Activated CD8-positive, alpha-beta T cell treated with anti-CD3 and anti-CD28 coated beads for 36 hours (primary cell): ENCODE measurements at regions of chr1 and their contacts with region 1.

Region 1: DNA sequence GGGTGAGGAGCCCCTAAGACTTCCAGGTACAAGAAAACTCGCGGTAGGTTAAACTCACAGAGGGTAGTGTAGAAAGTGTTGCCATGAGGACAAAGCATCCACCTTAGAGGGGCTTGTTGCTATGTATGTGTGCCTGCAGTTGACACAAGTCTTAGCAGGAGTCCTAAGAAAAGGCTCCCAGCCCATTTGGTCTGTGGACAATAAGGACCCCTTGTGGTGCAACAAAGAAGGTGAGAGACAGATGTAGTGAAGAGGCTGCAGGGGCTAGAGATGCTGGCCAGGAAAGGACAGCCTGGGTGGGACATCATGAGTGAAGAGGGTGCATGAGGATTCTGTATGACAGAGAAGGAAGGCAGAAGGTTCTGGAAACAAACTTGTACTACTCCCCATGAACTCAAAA is 36.3 kb upstream of the IL10 start:
- DNase-seq: peak; percentile 69
- ATAC-seq: peak; percentile 89
- H3K4me3 Mint-ChIP-seq: no peak overlapping the region
- H3K27ac Mint-ChIP-seq: no peak overlapping the region
- H3K4me1 Mint-ChIP-seq: peaks cover 49% of the 10 kb centered on the region
- H3K27me3 Mint-ChIP-seq: no peaks in the 10 kb centered on the region
- CTCF ChIP-seq: peak; percentile 69

Region 2: GRCh38 chr1:206716870-206717673 is 91.5 kb before region 1 on chr1:
- CTCF ChIA-PET with region 1: interaction called, 628 read pairs
- POLR2A ChIA-PET with region 1: no interaction called
- intact Hi-C with region 1: no loop called
- DNase-seq: peak; percentile 43
- ATAC-seq: peak; percentile 61
- H3K4me3 Mint-ChIP-seq: peak overlapping the region; percentile 15
- H3K27ac Mint-ChIP-seq: peak overlapping the region; percentile 79
- H3K4me1 Mint-ChIP-seq: peaks cover 81% of the 10 kb centered on the region
- H3K27me3 Mint-ChIP-seq: no peaks in the 10 kb centered on the region
- CTCF ChIP-seq: no peak

Region 3: DNA sequence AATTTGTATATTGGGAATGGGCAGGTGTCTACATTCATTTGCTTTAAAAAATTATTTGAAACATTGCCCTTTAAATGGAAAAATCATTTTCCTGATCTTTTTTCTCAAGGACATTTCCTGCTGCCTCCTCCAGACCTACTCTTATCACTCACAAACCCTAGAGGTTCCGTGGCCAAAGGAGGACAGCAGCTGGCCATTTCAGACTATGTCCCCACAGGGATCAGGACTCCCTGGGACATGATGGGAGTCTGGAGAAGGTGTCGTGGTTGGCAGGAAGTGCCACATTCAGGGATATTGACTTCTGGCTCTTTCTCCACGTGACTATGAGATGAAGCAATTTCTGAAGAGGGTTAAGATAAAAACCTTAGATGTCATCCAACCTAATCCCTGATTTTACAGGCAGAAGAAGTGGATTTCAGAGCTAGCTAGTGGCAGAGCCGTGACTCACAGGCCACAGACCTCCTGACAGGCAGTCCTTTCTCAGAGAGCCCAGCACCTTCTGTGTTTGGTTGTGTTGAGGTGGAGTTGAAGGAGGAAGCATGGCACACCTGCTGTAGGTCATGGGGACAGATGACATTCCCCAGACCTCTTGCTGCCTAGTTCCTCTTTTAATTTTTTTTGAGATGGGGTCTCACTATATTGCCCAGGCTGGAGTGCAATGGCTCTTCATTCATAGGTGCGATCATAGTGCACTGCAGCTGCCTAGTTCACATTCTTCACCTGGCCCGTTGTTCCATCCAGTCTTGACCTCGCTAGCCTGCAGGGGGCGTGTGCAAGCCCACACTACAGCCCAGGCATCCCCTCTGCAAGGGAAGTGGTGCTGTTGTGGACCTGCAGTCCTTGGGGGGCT is 10.9 kb before region 1 on chr1:
- CTCF ChIA-PET with region 1: interaction called, 21 read pairs
- POLR2A ChIA-PET with region 1: interaction called, 6 read pairs
- intact Hi-C with region 1: no loop called
- DNase-seq: peak; percentile 50
- ATAC-seq: no peak
- H3K4me3 Mint-ChIP-seq: no peak overlapping the region
- H3K27ac Mint-ChIP-seq: no peak overlapping the region
- H3K4me1 Mint-ChIP-seq: peaks cover 68% of the 10 kb centered on the region
- H3K27me3 Mint-ChIP-seq: no peaks in the 10 kb centered on the region
- CTCF ChIP-seq: peak; percentile 64

Region 4: GRCh38 chr1:206856674-206857464 is 48.3 kb after region 1 on chr1:
- CTCF ChIA-PET with region 1: interaction called, 46 read pairs
- POLR2A ChIA-PET with region 1: no interaction called
- intact Hi-C with region 1: no loop called
- DNase-seq: peak; percentile 30
- ATAC-seq: peak; percentile 72
- H3K4me3 Mint-ChIP-seq: no peak overlapping the region
- H3K27ac Mint-ChIP-seq: no peak overlapping the region
- H3K4me1 Mint-ChIP-seq: peaks cover 11% of the 10 kb centered on the region
- H3K27me3 Mint-ChIP-seq: no peaks in the 10 kb centered on the region
- CTCF ChIP-seq: peak; percentile 58

Region 5: GRCh38 chr1:206905280-206906164 is 96.9 kb after region 1 on chr1:
- CTCF ChIA-PET with region 1: interaction called, 25 read pairs
- POLR2A ChIA-PET with region 1: interaction called, 5 read pairs
- intact Hi-C with region 1: no loop called
- DNase-seq: peak; percentile 70
- ATAC-seq: peak; percentile 90
- H3K4me3 Mint-ChIP-seq: peak overlapping the region; percentile 34
- H3K27ac Mint-ChIP-seq: peak overlapping the region; percentile 96
- H3K4me1 Mint-ChIP-seq: peaks cover 79% of the 10 kb centered on the region
- H3K27me3 Mint-ChIP-seq: no peaks in the 10 kb centered on the region
- CTCF ChIP-seq: no peak

Region 6: GRCh38 chr1:206935491-206936067 is 127.0 kb after region 1 on chr1:
- CTCF ChIA-PET with region 1: interaction called, 26 read pairs
- POLR2A ChIA-PET with region 1: no interaction called
- intact Hi-C with region 1: no loop called
- DNase-seq: peak; percentile 71
- ATAC-seq: peak; percentile 58
- H3K4me3 Mint-ChIP-seq: no peak overlapping the region
- H3K27ac Mint-ChIP-seq: no peak overlapping the region
- H3K4me1 Mint-ChIP-seq: peaks cover 24% of the 10 kb centered on the region
- H3K27me3 Mint-ChIP-seq: no peaks in the 10 kb centered on the region
- CTCF ChIP-seq: peak; percentile 75

Region 7: GRCh38 chr1:207004981-207005830 is 196.6 kb after region 1 on chr1:
- CTCF ChIA-PET with region 1: no interaction called
- POLR2A ChIA-PET with region 1: no interaction called
- intact Hi-C with region 1: no loop called
- DNase-seq: peak; percentile 62
- ATAC-seq: peak; percentile 47
- H3K4me3 Mint-ChIP-seq: no peak overlapping the region
- H3K27ac Mint-ChIP-seq: no peak overlapping the region
- H3K4me1 Mint-ChIP-seq: no peaks in the 10 kb centered on the region
- H3K27me3 Mint-ChIP-seq: peaks cover 3% of the 10 kb centered on the region
- CTCF ChIP-seq: peak; percentile 74